ENCODE measurements at regions of chrX and their contacts with region 1.

Region 1: GRCh38 chrX:103686199-103687072 is at the start of gene MORF4L2:
- DNase-seq: peak; percentile 98
- H3K4me3 ChIP-seq: peak within 1 kb of the TSS; percentile 76 to 100 (median 85)
- H3K27ac ChIP-seq: peak within 1 kb of the TSS; percentile 98
- H3K4me1 ChIP-seq: peaks cover 20% of the 10 kb centered on the region
- H3K27me3 ChIP-seq: no peaks in the 10 kb centered on the region
- CTCF ChIP-seq: no peak
- POLR2A ChIP-seq: peak; percentile 95
- total RNA-seq, gene MORF4L2: 414 and 445 TPM in 2 replicates

Region 2: DNA sequence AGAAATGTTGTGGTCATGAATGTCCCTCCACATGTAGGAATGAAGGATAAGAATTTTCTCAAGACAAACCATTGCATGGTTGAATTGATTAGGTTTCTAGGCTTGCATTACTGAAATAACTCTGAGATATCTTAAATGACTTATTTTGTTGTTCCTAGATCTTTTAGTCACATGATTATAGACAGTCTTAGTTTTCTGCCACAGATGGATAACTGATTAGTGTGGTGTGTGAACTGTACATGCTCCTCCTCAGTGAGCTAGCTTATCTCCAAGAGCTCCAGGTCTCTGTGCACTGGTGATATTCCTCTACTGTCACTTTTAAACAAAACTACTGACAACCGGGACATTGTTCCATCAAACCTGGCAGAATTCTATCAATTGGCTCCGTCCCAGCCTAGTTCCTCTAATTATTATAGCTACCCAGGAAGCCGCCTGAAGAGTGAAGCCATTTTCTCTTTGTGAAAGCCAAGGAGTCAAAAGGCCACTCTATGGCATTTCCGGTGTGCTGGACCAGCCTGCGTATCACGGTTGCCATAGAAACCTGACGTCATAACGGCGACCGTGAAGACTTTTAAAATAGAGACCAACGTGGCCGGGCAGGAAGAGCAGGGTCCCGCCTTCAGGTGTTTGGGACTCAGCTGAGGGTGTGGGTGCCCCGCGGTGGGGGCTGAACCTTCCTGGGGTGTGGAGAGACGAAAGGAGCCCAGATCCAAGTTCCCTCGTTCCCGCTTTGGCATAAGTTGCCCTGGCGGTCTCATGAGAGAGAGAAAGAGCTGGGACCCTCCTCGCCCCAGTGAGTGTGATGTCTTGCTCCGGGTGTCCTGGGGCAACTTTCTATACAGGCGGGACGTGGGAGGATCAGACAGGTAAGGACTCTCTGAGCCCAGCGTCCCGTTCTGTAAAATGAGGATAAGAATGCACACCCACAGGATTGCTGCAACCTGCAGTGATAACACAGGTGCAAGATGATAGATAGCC is 281.9 kb before region 1 on chrX:
- CTCF ChIA-PET with region 1: no interaction called
- POLR2A ChIA-PET with region 1: no interaction called
- dilution Hi-C with region 1: no loop called
- intact Hi-C with region 1: loop called (anchors 1 kb)
- DNase-seq: peak; percentile 79
- H3K4me3 ChIP-seq: peak overlapping the region; percentile 19 to 62 (median 41)
- H3K27ac ChIP-seq: peak overlapping the region; percentile 71
- H3K4me1 ChIP-seq: peaks cover 11% of the 10 kb centered on the region
- H3K27me3 ChIP-seq: no peaks in the 10 kb centered on the region
- CTCF ChIP-seq: no peak
- POLR2A ChIP-seq: no peak

Region 3: GRCh38 chrX:103503163-103503852 is 183.1 kb before region 1 on chrX:
- CTCF ChIA-PET with region 1: no interaction called
- POLR2A ChIA-PET with region 1: no interaction called
- dilution Hi-C with region 1: no loop called
- intact Hi-C with region 1: no loop called
- DNase-seq: no peak
- H3K4me3 ChIP-seq: no peak overlapping the region
- H3K27ac ChIP-seq: no peak overlapping the region
- H3K4me1 ChIP-seq: no peaks in the 10 kb centered on the region
- H3K27me3 ChIP-seq: no peaks in the 10 kb centered on the region
- CTCF ChIP-seq: no peak
- POLR2A ChIP-seq: no peak

Region 4: DNA sequence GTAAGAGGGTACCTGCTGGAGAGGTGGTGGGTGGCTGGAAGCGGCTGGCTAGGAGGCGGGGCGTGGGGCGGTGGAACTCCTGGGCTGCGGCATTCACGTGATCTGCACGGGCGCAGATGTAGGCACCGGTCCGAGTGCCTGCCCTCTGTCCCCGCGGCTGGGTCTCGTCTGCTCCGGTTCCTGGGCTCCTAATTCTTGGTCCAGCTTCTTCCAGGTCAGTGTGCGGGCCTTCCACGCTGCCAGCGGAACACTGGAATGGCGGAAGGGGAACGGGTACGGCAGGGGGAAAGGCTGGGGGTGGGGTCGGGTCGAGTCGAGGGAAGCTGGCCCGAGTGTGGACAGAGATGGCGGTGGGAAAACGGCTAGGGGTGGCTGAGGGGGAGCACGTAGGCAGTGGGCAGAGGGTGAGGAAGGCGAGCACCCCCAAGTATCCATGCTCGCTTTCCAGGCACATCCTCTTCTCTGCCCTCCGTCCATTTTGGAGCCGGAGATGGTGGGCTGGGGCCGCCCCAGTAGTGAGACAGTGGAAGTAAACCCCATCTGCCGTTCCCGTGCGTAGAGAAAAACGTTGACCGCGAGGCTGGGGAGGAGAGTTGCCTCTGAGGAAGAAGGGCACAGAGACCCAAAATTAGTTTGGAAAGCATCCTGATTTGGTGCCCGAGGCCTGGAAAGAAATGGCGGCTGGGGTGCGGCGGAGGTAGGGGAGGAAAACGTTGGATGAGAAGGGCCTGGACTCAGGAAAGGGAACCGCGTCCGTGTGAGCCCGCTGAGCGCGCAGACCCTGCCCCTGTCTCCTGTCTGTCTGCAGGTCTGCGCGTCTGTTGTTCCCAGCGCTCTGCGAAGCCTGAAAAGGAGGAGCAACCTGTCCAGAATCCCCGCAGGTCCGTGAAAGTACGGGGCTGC is 100.8 kb before region 1 on chrX and contains the start of gene TCEAL4:
- CTCF ChIA-PET with region 1: no interaction called
- POLR2A ChIA-PET with region 1: no interaction called
- dilution Hi-C with region 1: no loop called
- intact Hi-C with region 1: loop called (anchors 2 kb)
- DNase-seq: peak; percentile 36
- H3K4me3 ChIP-seq: peak within 1 kb of the TSS; percentile 63 to 87 (median 68)
- H3K27ac ChIP-seq: peak within 1 kb of the TSS; percentile 32
- H3K4me1 ChIP-seq: no peaks in the 10 kb centered on the region
- H3K27me3 ChIP-seq: no peaks in the 10 kb centered on the region
- CTCF ChIP-seq: no peak
- POLR2A ChIP-seq: peak; percentile 30
- total RNA-seq, gene TCEAL4: 60.4 and 74.6 TPM in 2 replicates

Region 5: GRCh38 chrX:103774070-103774642 is 87.7 kb after region 1 on chrX:
- CTCF ChIA-PET with region 1: interaction called, 3 read pairs
- POLR2A ChIA-PET with region 1: no interaction called
- dilution Hi-C with region 1: no loop called
- intact Hi-C with region 1: loop called (anchors 1 kb)
- DNase-seq: peak; percentile 40
- H3K4me3 ChIP-seq: no peak overlapping the region
- H3K27ac ChIP-seq: no peak overlapping the region
- H3K4me1 ChIP-seq: no peaks in the 10 kb centered on the region
- H3K27me3 ChIP-seq: peaks cover 0 to 2% of the 10 kb centered on the region in 2 experiments
- CTCF ChIP-seq: peak; percentile 39 to 40
- POLR2A ChIP-seq: no peak

Region 6: GRCh38 chrX:103918581-103919269 is 232.3 kb after region 1 on chrX:
- CTCF ChIA-PET with region 1: no interaction called
- POLR2A ChIA-PET with region 1: no interaction called
- dilution Hi-C with region 1: no loop called
- intact Hi-C with region 1: loop called (anchors 2 kb)
- DNase-seq: peak; percentile 76
- H3K4me3 ChIP-seq: peak overlapping the region; percentile 21 to 64 (median 40)
- H3K27ac ChIP-seq: peak overlapping the region; percentile 13
- H3K4me1 ChIP-seq: no peaks in the 10 kb centered on the region
- H3K27me3 ChIP-seq: no peaks in the 10 kb centered on the region
- CTCF ChIP-seq: no peak
- POLR2A ChIP-seq: no peak

Region 7: GRCh38 chrX:104165894-104166737 is 479.7 kb after region 1 on chrX and contains the start of gene FAM199X:
- CTCF ChIA-PET with region 1: no interaction called
- POLR2A ChIA-PET with region 1: no interaction called
- dilution Hi-C with region 1: no loop called
- intact Hi-C with region 1: loop called (anchors 2 kb)
- DNase-seq: peak; percentile 91
- H3K4me3 ChIP-seq: peak within 1 kb of the TSS; percentile 70 to 98 (median 88)
- H3K27ac ChIP-seq: peak within 1 kb of the TSS; percentile 78
- H3K4me1 ChIP-seq: peaks cover 12% of the 10 kb centered on the region
- H3K27me3 ChIP-seq: no peaks in the 10 kb centered on the region
- CTCF ChIP-seq: peak; percentile 60 to 64
- POLR2A ChIP-seq: peak; percentile 55
- total RNA-seq, gene FAM199X: 16.8 and 18.1 TPM in 2 replicates

Measured in endothelial cell of umbilical vein (primary cell).